CD14-positive monocyte (primary cell): ENCODE measurements at regions of chr7 and their contacts with region 1.

Region 1: GRCh38 chr7:134514663-134515062 is 12.7 kb upstream of the AKR1B10 start:
- DNase-seq: peak; percentile 49 to 69 (median 65)
- H3K4me3 ChIP-seq: no peak overlapping the region
- H3K4me3 Mint-ChIP-seq: peak overlapping the region in 1 of 2 donors; percentile 33
- H3K27ac ChIP-seq: no peak overlapping the region
- H3K27ac Mint-ChIP-seq: no peak overlapping the region
- H3K4me1 ChIP-seq: peaks cover 5 to 13% of the 10 kb centered on the region in 2 donors
- H3K4me1 Mint-ChIP-seq: peaks cover 18% of the 10 kb centered on the region
- H3K27me3 ChIP-seq: no peaks in the 10 kb centered on the region
- H3K27me3 Mint-ChIP-seq: peaks cover 7 to 20% (median 11%) of the 10 kb centered on the region in 3 donors
- CTCF ChIP-seq: peak; percentile 92

Region 2: GRCh38 chr7:134470864-134471263 is 43.8 kb before region 1 on chr7:
- intact Hi-C with region 1: no loop called
- DNase-seq: peak in 1 of 3 donors; percentile 33
- H3K4me3 ChIP-seq: no peak overlapping the region
- H3K4me3 Mint-ChIP-seq: no peak overlapping the region
- H3K27ac ChIP-seq: no peak overlapping the region
- H3K27ac Mint-ChIP-seq: peak overlapping the region in 1 of 7 donors; percentile 75
- H3K4me1 ChIP-seq: no peaks in the 10 kb centered on the region
- H3K4me1 Mint-ChIP-seq: no peaks in the 10 kb centered on the region
- H3K27me3 ChIP-seq: no peaks in the 10 kb centered on the region
- H3K27me3 Mint-ChIP-seq: peaks cover 2 to 3% (median 2%) of the 10 kb centered on the region in 3 donors
- CTCF ChIP-seq: no peak

Region 3: GRCh38 chr7:134547397-134548054 is 32.9 kb after region 1 on chr7:
- intact Hi-C with region 1: no loop called
- DNase-seq: peak; percentile 44 to 64 (median 54)
- H3K4me3 ChIP-seq: no peak overlapping the region
- H3K4me3 Mint-ChIP-seq: peak overlapping the region; percentile 53 to 78
- H3K27ac ChIP-seq: no peak overlapping the region
- H3K27ac Mint-ChIP-seq: no peak overlapping the region
- H3K4me1 ChIP-seq: peaks cover 0 to 4% of the 10 kb centered on the region in 2 donors
- H3K4me1 Mint-ChIP-seq: peaks cover 4% of the 10 kb centered on the region
- H3K27me3 ChIP-seq: no peaks in the 10 kb centered on the region
- H3K27me3 Mint-ChIP-seq: peaks cover 6 to 13% (median 9%) of the 10 kb centered on the region in 3 donors
- CTCF ChIP-seq: peak; percentile 90

Region 4: GRCh38 chr7:134593530-134594392 is 79.1 kb after region 1 on chr7:
- intact Hi-C with region 1: loop called in 1 of 2 experiments (anchors 10 kb)
- DNase-seq: peak in 2 of 3 donors; percentile 19 to 24
- H3K4me3 ChIP-seq: no peak overlapping the region
- H3K4me3 Mint-ChIP-seq: peak overlapping the region in 1 of 2 donors; percentile 44
- H3K27ac ChIP-seq: peak overlapping the region in 1 of 2 donors; percentile 63
- H3K27ac Mint-ChIP-seq: peak overlapping the region in 6 of 7 donors; percentile 12 to 82 (median 71)
- H3K4me1 ChIP-seq: peaks cover 8 to 9% of the 10 kb centered on the region in 2 donors
- H3K4me1 Mint-ChIP-seq: peaks cover 9% of the 10 kb centered on the region
- H3K27me3 ChIP-seq: no peaks in the 10 kb centered on the region
- H3K27me3 Mint-ChIP-seq: peaks cover 0 to 2% (median 1%) of the 10 kb centered on the region in 3 donors
- CTCF ChIP-seq: no peak